Right ventricle myocardium inferior (tissue), 1 donor: ENCODE measurements at regions of chr13 and their contacts with region 1.

Region 1: DNA sequence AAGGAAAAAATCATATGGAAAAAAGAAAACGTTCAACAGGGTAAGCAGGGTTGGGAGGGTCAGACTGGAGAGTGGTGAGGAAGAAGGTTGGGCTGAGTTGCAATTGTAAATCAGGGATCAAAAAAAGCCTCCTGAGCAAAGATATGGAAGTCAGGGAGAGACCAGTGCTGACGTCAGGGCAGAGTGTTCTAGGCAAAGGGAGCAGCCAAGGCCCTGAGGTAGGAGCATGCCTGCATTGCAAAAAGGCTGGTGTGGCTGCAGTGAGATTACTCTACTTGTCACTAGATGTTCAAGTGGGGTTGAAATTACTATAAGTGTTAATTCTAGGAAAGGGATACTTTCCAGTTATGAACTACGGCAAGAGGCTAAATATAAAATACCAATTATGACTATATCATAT is 562.0 kb downstream of the MYO16 start:
- DNase-seq: no peak
- ATAC-seq: peak; percentile 94

Region 2: GRCh38 chr13:109113427-109113826 is 78.0 kb before region 1 on chr13:
- intact Hi-C with region 1: no loop called
- DNase-seq: no peak
- ATAC-seq: no peak

Region 3: GRCh38 chr13:109166804-109167203 is 24.6 kb before region 1 on chr13:
- intact Hi-C with region 1: no loop called
- DNase-seq: no peak
- ATAC-seq: peak; percentile 46

Region 4: DNA sequence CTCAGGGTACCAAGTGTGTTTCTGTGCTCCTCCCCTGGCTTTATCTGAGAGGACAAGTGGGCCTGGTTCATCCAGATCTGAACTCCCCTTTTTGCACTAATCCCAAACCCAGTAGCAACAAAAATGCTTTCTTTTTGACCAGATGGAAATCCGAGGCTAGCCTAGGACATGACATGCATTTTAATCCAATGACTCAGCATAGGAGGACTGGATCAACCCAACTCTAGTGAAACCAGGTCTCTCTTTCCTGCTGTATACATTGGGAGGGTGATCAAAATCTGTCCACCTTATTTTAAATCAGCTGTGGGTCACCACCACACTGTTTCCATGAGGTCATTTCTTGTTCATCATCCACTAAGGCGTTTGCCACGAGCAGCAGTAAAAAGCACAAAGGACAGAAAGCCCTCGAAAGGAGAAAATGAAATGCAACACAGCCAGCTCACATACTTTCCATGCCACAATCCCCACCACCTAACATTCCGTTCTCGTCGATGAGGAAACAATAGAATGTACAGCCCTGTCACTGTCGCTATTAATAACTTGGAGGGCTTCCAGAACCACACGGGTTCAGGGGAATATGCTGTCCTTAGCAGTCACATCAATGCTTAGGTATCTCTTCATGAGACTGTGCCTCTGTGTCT is 52.0 kb after region 1 on chr13:
- intact Hi-C with region 1: loop called (anchors 5 kb)
- DNase-seq: no peak
- ATAC-seq: peak; percentile 92

Region 5: GRCh38 chr13:109764470-109765291 is 573.3 kb after region 1 on chr13:
- intact Hi-C with region 1: no loop called
- DNase-seq: no peak
- ATAC-seq: peak; percentile 65